ENCODE measurements at regions of chr11 and their contacts with region 1.

Region 1: DNA sequence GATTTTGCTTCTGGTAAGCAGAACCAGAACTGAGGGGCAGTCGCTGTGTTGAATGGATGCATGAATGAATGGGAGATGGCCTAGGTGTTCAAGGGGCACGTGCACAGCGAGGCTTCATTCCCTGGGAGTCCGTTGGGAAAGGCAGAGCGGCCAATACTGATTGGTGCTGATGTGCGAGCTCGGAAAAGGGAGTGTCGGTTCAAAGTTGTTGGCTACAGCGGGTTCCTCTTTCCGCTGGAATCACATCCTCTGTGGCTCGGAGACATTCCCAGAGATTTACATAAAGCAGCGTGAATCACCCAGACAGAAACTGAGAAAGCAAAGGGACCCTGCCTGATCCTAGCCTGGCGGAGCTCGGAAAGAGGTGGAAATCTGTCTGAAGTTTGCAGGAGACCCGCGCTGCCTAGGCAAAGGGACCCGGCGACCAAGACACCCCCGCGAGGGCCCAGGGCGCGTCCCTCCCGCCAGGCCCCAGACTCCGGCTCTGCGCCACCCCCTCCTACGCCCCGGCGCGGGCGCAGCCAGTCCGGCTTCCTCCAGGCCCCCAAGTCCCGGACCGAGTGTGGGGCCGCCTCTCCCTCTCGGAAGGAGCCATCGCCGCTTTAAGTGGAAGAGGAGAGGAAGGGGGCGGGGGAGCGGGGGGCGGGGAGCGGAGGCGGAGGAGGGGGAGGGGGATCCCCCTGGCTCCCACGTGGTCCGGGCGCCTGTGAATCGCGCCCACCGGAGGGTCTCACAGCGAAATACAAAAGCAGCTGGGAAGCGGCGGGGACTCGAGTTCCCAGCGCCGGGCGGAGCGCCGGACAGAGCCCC is at the start of gene FJX1:
- DNase-seq: peak; percentile 65
- H3K4me3 Mint-ChIP-seq: peak within 1 kb of the TSS; percentile 73
- H3K27ac Mint-ChIP-seq: peak within 1 kb of the TSS; percentile 71
- H3K4me1 Mint-ChIP-seq: peaks cover 5% of the 10 kb centered on the region
- H3K27me3 Mint-ChIP-seq: peaks cover 52% of the 10 kb centered on the region
- total RNA-seq, gene FJX1: 0.26 and 0.30 TPM in 2 replicates

Region 2: GRCh38 chr11:35511666-35512065 is 106.2 kb before region 1 on chr11:
- intact Hi-C with region 1: no loop called
- DNase-seq: no peak
- H3K4me3 Mint-ChIP-seq: no peak overlapping the region
- H3K27ac Mint-ChIP-seq: no peak overlapping the region
- H3K4me1 Mint-ChIP-seq: no peaks in the 10 kb centered on the region
- H3K27me3 Mint-ChIP-seq: peaks cover 4% of the 10 kb centered on the region

Region 3: GRCh38 chr11:35662649-35663407 is 44.9 kb after region 1 on chr11 and contains the start of gene TRIM44:
- intact Hi-C with region 1: loop called (anchors 2 kb)
- DNase-seq: peak; percentile 95
- H3K4me3 Mint-ChIP-seq: peak within 1 kb of the TSS; percentile 95
- H3K27ac Mint-ChIP-seq: peak within 1 kb of the TSS; percentile 93
- H3K4me1 Mint-ChIP-seq: peaks cover 32% of the 10 kb centered on the region
- H3K27me3 Mint-ChIP-seq: peaks cover 16% of the 10 kb centered on the region
- total RNA-seq, gene TRIM44: 27.3 and 27.8 TPM in 2 replicates

Region 4: GRCh38 chr11:35943713-35944655 is 326.1 kb after region 1 on chr11 and contains the start of gene LDLRAD3:
- intact Hi-C with region 1: loop called (anchors 5 kb)
- DNase-seq: peak; percentile 77
- H3K4me3 Mint-ChIP-seq: peak within 1 kb of the TSS; percentile 81
- H3K27ac Mint-ChIP-seq: peak within 1 kb of the TSS; percentile 54
- H3K4me1 Mint-ChIP-seq: peaks cover 7% of the 10 kb centered on the region
- H3K27me3 Mint-ChIP-seq: peaks cover 51% of the 10 kb centered on the region
- total RNA-seq, gene LDLRAD3: 0.54 and 1.4 TPM in 2 replicates

Region 5: DNA sequence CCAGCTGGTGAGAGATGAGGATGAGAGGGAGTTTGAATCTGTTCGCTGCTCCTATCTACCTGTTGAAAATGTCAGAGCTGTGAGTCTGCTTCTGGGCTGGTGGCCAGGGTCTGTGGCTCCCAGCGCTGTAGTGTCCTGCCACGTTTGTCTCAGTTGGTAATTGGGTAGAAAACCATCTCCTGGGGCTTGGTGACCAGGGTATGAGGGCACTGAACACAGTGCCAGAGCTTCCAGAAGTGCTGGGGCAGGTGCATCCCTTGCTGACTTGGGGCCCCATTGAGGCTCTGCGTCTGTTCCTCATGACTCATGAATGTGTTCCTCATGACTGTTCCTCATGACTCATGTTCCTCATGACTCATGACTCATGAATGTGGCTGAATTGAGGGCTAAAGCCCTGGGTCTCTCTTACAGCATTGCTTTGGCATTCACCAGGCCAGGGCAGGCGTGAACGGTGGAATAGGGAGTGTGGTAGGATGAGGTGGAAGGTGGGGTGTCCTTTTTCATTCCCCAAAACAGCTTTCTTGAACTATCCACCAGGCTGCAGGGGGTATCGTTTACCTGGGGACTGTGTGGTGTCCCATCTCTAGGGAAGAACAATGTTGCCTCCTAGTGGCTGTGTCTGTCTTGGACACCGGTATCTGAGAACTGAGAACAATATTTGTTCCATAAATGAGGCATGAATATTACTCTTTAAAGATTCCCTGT is 531.8 kb after region 1 on chr11:
- intact Hi-C with region 1: loop called (anchors 5 kb)
- DNase-seq: peak; percentile 72
- H3K4me3 Mint-ChIP-seq: peak overlapping the region; percentile 21
- H3K27ac Mint-ChIP-seq: peak overlapping the region; percentile 66
- H3K4me1 Mint-ChIP-seq: peaks cover 10% of the 10 kb centered on the region
- H3K27me3 Mint-ChIP-seq: peaks cover 9% of the 10 kb centered on the region

Region 6: GRCh38 chr11:36492724-36493304 is 874.9 kb after region 1 on chr11:
- intact Hi-C with region 1: loop called (anchors 5 kb)
- DNase-seq: peak; percentile 79
- H3K4me3 Mint-ChIP-seq: no peak overlapping the region
- H3K27ac Mint-ChIP-seq: no peak overlapping the region
- H3K4me1 Mint-ChIP-seq: peaks cover 16% of the 10 kb centered on the region
- H3K27me3 Mint-ChIP-seq: no peaks in the 10 kb centered on the region